Activated CD8-positive, alpha-beta T cell treated with anti-CD3 and anti-CD28 coated beads for 36 hours (primary cell): ENCODE measurements at regions of chr2 and their contacts with region 1.

Region 1: DNA sequence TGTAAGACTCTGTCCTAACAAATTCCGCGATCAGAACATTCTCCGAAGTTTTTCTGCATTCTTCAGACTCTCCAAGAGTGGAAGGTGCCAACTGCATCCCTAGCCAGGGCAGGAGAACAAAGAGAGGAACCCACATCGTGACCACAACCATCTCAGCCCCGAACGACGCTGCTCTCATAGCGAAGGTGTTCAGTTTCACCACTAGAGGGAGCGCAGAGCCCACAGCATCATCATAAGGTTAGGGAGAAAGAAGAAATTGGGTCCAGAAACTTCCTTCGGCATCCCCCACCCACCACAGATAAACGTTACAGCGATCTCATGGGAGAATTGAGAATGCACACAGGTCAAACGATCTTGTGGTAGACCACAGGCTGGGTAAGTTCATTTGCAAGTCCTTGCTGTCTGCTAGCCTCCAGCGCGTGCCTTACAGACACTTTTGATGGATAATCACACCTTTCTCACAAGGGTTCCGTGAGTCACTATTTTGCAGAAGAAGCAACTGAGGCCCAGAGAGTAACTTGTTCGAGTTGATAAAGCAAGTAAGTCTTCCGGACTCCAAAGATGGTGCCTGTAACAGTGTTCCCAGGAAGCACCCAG is 53.7 kb upstream of the ARL4C start:
- DNase-seq: peak; percentile 66
- ATAC-seq: peak; percentile 73
- H3K4me3 Mint-ChIP-seq: no peak overlapping the region
- H3K27ac Mint-ChIP-seq: no peak overlapping the region
- H3K4me1 Mint-ChIP-seq: peaks cover 4% of the 10 kb centered on the region
- H3K27me3 Mint-ChIP-seq: peaks cover 14% of the 10 kb centered on the region
- CTCF ChIP-seq: peak; percentile 95

Region 2: GRCh38 chr2:234308813-234309195 is 241.8 kb before region 1 on chr2:
- CTCF ChIA-PET with region 1: no interaction called
- POLR2A ChIA-PET with region 1: no interaction called
- intact Hi-C with region 1: no loop called
- DNase-seq: peak; percentile 89
- ATAC-seq: peak; percentile 88
- H3K4me3 Mint-ChIP-seq: peak overlapping the region; percentile 40
- H3K27ac Mint-ChIP-seq: peak overlapping the region; percentile 96
- H3K4me1 Mint-ChIP-seq: peaks cover 53% of the 10 kb centered on the region
- H3K27me3 Mint-ChIP-seq: no peaks in the 10 kb centered on the region
- CTCF ChIP-seq: no peak

Region 3: DNA sequence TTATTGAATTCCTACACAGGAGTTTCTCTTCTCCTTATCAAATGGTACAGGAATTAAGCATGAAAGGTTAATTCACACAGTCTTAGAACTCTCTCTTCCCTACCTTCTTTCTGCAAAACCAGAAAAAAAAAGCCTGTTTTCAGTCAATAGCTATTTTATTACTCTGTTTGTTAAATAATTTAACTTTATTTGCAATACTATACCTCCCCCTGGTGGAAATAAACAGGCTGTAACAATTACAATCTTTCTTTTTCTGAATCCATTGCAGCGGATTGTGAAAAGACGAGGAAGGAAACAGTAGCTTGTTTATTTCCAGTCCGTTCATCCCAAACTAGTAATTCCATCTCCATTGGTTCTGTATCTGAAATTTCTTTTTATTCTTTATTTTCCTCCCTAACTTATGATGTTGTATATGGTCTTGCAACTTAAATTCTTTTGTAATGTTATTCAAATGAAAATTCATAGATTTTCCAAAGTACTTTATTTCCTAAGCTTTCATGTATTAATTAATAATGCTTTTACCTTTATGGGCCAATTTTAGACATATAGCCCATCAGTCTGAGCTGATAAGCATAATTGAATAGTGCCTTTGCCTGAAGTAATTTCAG is 566.4 kb after region 1 on chr2:
- CTCF ChIA-PET with region 1: interaction called, 15 read pairs
- POLR2A ChIA-PET with region 1: no interaction called
- intact Hi-C with region 1: loop called (anchors 5 kb)
- DNase-seq: no peak
- ATAC-seq: no peak
- H3K4me3 Mint-ChIP-seq: no peak overlapping the region
- H3K27ac Mint-ChIP-seq: no peak overlapping the region
- H3K4me1 Mint-ChIP-seq: no peaks in the 10 kb centered on the region
- H3K27me3 Mint-ChIP-seq: peaks cover 12% of the 10 kb centered on the region
- CTCF ChIP-seq: peak; percentile 80